H1 (cell line): ENCODE measurements at regions of chr22 and their contacts with region 1.

Region 1: DNA sequence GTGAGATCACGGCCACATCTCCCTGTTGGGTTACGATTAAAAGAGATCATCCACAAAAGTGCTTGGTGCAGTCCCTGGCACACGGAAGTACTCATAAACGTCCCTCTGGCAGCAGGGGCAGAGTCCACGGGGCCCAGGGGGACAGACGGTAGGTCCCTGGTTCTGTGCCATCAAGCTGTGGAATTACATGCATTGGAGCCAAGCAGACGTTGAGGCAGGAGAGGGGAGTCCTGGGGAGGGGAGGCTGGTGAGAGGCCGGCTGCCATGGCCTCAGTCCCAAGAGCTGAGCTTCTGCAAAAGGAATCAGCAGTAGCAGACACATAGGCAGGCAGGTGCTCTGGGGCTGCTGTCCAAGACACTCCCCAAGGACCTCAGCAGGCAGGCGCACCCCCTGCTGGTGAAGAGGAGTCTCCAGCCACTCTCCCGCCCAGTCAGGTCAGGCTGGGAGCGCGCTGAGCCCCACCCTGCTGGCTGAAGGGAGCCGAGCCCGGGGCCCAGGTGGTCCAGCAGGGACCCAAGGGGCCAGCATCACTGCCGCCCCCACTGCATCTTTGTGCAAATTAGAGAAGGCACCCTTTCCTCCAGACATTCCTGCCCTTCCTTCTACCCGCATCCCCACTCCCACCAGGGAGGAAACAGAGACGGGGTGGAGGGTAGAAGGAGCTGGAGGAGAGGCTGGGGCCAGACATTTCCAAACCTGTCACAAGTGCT is 7.6 kb upstream of the KCTD17 start:
- DNase-seq: no peak
- H3K4me3 ChIP-seq: no peak overlapping the region
- H3K27ac ChIP-seq: no peak overlapping the region
- H3K4me1 ChIP-seq: no peaks in the 10 kb centered on the region; a peak in 1 of 7 replicates
- H3K27me3 ChIP-seq: peaks cover 0 to 11% (median 0%) of the 10 kb centered on the region in 4 experiments; a peak in 4 of 7 replicates
- CTCF ChIP-seq: peak; percentile 15 to 45 (median 20); a peak in 3 of 4 replicates
- EP300 ChIP-seq: no peak
- POLR2A ChIP-seq: no peak
- RAD21 ChIP-seq: no peak; a peak in 1 of 4 replicates

Region 2: DNA sequence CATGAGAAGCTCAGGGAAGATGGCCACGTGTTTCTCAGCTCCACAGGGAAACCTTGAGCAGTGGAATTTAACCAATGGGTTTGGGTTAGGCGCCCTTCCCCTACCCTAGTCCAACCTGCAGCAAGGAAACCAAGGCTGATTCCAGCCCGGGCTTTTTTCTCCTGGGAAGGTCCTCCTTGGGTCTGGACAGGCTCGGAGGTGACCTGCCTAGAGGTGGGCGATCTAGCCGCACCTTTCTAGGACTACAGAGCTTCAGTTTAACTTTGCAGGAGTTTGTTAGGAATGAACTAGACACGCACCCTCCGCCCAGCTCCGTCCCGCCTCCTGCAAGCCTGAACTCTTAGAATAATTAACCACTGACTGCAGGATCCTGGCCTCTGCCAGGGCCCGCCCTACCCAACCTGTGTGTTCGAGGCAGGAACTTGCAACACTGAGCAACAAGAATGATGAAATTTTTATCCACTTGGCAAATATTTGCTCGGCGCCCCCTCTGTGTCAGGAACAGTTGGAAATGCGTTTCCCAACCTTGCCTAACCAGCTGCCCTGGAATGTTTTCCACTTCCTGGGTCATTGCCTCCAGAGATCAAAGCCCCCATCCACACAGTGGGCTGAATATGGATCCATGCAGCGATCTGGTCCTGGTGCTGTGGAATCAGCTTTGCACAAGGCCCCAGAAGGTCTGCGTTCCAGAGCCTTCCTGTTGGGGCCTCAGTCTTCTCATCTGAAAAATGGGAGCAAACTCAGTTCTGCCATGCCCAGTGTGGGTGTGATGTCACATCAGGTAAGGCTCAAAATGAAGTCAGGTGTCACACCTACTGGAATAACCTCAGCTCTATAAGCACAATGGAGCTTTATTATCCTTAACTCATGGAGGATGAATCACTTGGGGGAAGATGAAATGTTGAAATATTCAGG is 11.2 kb before region 1 on chr22:
- CTCF ChIA-PET with region 1: interaction called, 56 read pairs
- POLR2A ChIA-PET with region 1: interaction called, 13 read pairs
- DNase-seq: peak in 1 of 2 experiments; percentile 50
- H3K4me3 ChIP-seq: no peak overlapping the region
- H3K27ac ChIP-seq: no peak overlapping the region
- H3K4me1 ChIP-seq: peaks cover 0 to 11% (median 5%) of the 10 kb centered on the region in 4 experiments; a peak in 4 of 7 replicates
- H3K27me3 ChIP-seq: 0 out of 7 replicates have a peak, but pooled peaks cover 0 to 3% (median 0%) of the 10 kb centered on the region in 4 experiments
- CTCF ChIP-seq: no peak
- EP300 ChIP-seq: no peak
- POLR2A ChIP-seq: no peak
- RAD21 ChIP-seq: no peak

Region 3: GRCh38 chr22:37077884-37078485 is 34.0 kb after region 1 on chr22:
- CTCF ChIA-PET with region 1: interaction called, 16 read pairs
- POLR2A ChIA-PET with region 1: no interaction called
- DNase-seq: peak; percentile 29 to 96
- H3K4me3 ChIP-seq: no peak overlapping the region
- H3K27ac ChIP-seq: no peak overlapping the region
- H3K4me1 ChIP-seq: peaks cover 0 to 3% (median under 1%) of the 10 kb centered on the region in 4 experiments; a peak in 3 of 7 replicates
- H3K27me3 ChIP-seq: peaks cover 0 to 30% (median 13%) of the 10 kb centered on the region in 4 experiments; a peak in 5 of 7 replicates
- CTCF ChIP-seq: peak; percentile 90 to 99 (median 93)
- EP300 ChIP-seq: no peak
- POLR2A ChIP-seq: no peak
- RAD21 ChIP-seq: peak; percentile 70 to 81